HEK293 (cell line): ENCODE measurements at regions of chr22 and their contacts with region 1.

Region 1: GRCh38 chr22:17077255-17077654 is 7.5 kb upstream of the IL17RA start:
- H3K4me3 ChIP-seq: no peak overlapping the region
- H3K27ac ChIP-seq: no peak overlapping the region
- H3K4me1 ChIP-seq: no peaks in the 10 kb centered on the region
- CTCF ChIP-seq: no peak

Region 2: DNA sequence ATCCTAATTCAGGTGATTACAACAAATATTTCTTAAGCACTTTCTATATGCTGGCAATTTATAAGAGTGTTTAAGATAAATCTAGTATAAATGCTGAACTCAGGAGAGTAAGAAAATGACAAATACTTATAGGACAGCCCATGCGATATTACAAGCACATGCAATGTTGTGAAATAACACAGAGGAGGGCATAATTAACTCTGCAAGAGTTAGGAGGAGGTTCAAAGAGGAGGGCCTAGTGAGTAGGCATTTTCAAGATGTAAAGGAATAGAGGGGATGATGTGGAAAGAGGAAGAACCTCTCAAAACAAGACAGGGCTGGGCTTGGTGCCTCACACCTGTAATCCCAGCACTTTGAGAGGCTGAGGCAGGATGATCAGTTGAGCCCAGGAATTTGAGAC is 29.6 kb before region 1 on chr22:
- CTCF ChIA-PET with region 1: no interaction called
- POLR2A ChIA-PET with region 1: no interaction called
- H3K4me3 ChIP-seq: no peak overlapping the region
- H3K27ac ChIP-seq: no peak overlapping the region
- H3K4me1 ChIP-seq: no peaks in the 10 kb centered on the region
- CTCF ChIP-seq: no peak

Region 3: GRCh38 chr22:17095538-17095937 is 18.3 kb after region 1 on chr22:
- CTCF ChIA-PET with region 1: interaction called, 13 read pairs
- POLR2A ChIA-PET with region 1: no interaction called
- H3K4me3 ChIP-seq: no peak overlapping the region
- H3K27ac ChIP-seq: no peak overlapping the region
- H3K4me1 ChIP-seq: no peaks in the 10 kb centered on the region
- CTCF ChIP-seq: no peak

Region 4: GRCh38 chr22:17303840-17304779 is 226.9 kb after region 1 on chr22:
- CTCF ChIA-PET with region 1: no interaction called
- POLR2A ChIA-PET with region 1: no interaction called
- H3K4me3 ChIP-seq: no peak overlapping the region
- H3K27ac ChIP-seq: no peak overlapping the region
- H3K4me1 ChIP-seq: no peaks in the 10 kb centered on the region
- CTCF ChIP-seq: no peak